ENCODE measurements at regions of chr4 and their contacts with region 1.

Region 1: GRCh38 chr4:184733654-184734524 is at the start of gene CENPU:
- DNase-seq: peak; percentile 99 to 100 (median 100)
- ATAC-seq: peak; percentile 96
- H3K4me3 ChIP-seq: peak within 1 kb of the TSS; percentile 78
- H3K27ac ChIP-seq: peak within 1 kb of the TSS; percentile 84
- H3K4me1 ChIP-seq: peaks cover 0 to 8% of the 10 kb centered on the region in 2 experiments; a peak in 1 of 5 replicates
- H3K27me3 ChIP-seq: no peaks in the 10 kb centered on the region
- CTCF ChIP-seq: no peak
- EP300 ChIP-seq: peak; percentile 67
- POLR2A ChIP-seq: peak; percentile 93
- RAD21 ChIP-seq: no peak
- polyA plus RNA-seq, gene CENPU: 39.4 to 53.7 TPM

Region 2: DNA sequence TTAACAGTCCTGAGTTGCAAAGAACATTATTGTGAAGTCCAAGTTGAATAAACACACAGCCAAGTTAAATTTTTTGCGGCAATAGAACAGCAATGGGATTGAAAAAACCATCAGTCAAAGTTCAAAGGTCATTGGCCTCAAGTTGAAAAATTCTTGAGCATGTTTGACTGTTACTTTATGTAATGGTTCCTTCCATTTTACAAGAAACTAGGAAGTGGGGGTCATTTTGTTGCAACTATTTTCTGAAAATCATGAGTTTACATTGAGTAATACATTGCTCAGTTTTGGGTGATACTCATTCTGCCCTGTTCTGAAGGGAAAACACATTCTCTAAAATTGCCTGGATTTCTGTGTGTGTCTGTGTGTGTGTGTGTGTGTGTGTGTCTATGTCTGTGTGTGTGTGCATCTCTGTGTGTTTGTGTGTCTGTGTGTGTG is 254.4 kb before region 1 on chr4:
- CTCF ChIA-PET with region 1: no interaction called
- POLR2A ChIA-PET with region 1: no interaction called
- in situ Hi-C with region 1: no loop called
- intact Hi-C with region 1: no loop called
- DNase-seq: no peak
- ATAC-seq: no peak
- H3K4me3 ChIP-seq: no peak overlapping the region
- H3K27ac ChIP-seq: no peak overlapping the region
- H3K4me1 ChIP-seq: peaks cover 3 to 15% of the 10 kb centered on the region in 2 experiments
- H3K27me3 ChIP-seq: no peaks in the 10 kb centered on the region
- CTCF ChIP-seq: no peak
- EP300 ChIP-seq: no peak
- POLR2A ChIP-seq: no peak
- RAD21 ChIP-seq: no peak

Region 3: GRCh38 chr4:184649026-184649970 is 84.6 kb before region 1 on chr4 and contains the starts of genes CASP3 and PRIMPOL:
- CTCF ChIA-PET with region 1: no interaction called
- POLR2A ChIA-PET with region 1: no interaction called
- in situ Hi-C with region 1: no loop called
- intact Hi-C with region 1: loop called (anchors 2 kb)
- DNase-seq: peak; percentile 91 to 98 (median 92)
- ATAC-seq: peak; percentile 92
- H3K4me3 ChIP-seq: peak within 1 kb of the TSS; percentile 96
- H3K27ac ChIP-seq: peak within 1 kb of the TSS; percentile 89
- H3K4me1 ChIP-seq: peaks cover 17 to 19% of the 10 kb centered on the region in 2 experiments
- H3K27me3 ChIP-seq: no peaks in the 10 kb centered on the region
- CTCF ChIP-seq: peak in 2 of 3 experiments; percentile 59 to 64; a peak in 4 of 6 replicates
- EP300 ChIP-seq: no peak
- POLR2A ChIP-seq: peak; percentile 84
- RAD21 ChIP-seq: peak; percentile 47
- polyA plus RNA-seq, gene CASP3: 17.6 to 39.3 TPM
- polyA plus RNA-seq, gene PRIMPOL: 11.0 to 14.2 TPM

Region 4: DNA sequence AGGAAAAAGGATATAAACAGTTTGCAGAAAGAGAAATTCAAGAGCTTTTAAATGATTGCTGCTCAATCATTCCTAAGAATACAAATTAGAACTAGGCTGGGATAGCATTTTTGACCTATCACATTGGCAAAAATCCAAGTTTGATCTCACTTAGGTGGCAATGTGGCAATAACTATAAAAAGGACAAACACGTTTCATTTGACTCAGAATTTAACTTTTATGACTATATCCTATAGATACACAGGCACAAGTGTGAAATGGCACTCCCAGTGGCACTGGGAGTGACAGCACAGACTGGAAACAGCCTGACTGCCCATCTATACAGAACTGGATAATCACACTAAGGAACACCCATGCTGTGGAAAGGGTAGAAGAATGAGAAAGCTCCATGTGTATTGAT is 11.1 kb before region 1 on chr4:
- CTCF ChIA-PET with region 1: no interaction called
- POLR2A ChIA-PET with region 1: interaction called, 15 read pairs
- in situ Hi-C with region 1: no loop called
- intact Hi-C with region 1: no loop called
- DNase-seq: peak in 1 of 4 experiments; percentile 8
- ATAC-seq: peak; percentile 73
- H3K4me3 ChIP-seq: no peak overlapping the region
- H3K27ac ChIP-seq: no peak overlapping the region
- H3K4me1 ChIP-seq: no peaks in the 10 kb centered on the region
- H3K27me3 ChIP-seq: no peaks in the 10 kb centered on the region
- CTCF ChIP-seq: 0 out of 6 replicates have a peak, but pooled peaks of 2 of the 3 experiments have one; percentile 11 to 20
- EP300 ChIP-seq: no peak
- POLR2A ChIP-seq: no peak
- RAD21 ChIP-seq: no peak

Region 5: DNA sequence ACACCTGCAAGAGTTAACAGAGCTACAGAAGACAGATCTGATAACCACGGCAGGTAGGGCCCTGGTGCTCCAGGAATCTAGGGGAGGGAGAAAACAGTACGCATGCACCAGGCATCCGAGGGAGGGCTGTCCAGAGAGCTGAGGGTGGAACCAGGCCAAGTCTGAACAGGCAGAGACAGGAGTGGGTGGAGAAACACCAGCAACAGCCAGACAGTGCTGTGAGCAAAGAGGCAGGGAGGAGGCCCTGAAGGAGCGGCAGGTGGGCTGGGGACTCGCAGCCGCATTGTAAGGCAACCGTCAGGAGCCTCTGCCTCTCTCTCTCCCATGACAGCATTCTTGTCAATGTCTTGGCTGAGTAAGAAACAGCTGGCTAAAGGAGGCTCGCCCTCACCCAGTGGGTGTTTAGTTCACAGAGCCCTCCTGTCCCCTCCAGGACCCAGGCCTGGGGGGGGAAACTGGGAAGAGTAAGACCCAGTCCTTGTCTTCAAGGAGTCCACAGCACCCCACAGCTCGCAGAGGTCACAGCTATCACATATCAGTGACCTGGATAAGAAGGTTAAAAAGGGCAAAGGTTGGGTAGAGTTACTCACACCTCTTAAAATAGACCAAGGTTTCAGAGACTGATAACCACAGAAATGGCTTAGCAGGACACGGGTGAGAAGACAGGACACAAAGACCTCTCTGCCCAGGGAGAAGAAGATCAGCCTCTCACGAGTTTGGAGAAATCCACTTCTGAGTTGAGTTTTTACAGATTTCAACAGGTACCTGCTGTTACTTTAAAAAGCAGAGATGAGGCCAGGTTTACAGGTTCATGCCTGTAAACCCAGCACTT is 81.4 kb after region 1 on chr4:
- CTCF ChIA-PET with region 1: no interaction called
- POLR2A ChIA-PET with region 1: no interaction called
- in situ Hi-C with region 1: no loop called
- intact Hi-C with region 1: loop called (anchors 1 kb)
- DNase-seq: peak; percentile 42 to 86 (median 62)
- ATAC-seq: peak; percentile 93
- H3K4me3 ChIP-seq: no peak overlapping the region
- H3K27ac ChIP-seq: peak overlapping the region; percentile 37; the same call in 2 of the 3 replicates
- H3K4me1 ChIP-seq: peaks cover 26 to 51% of the 10 kb centered on the region in 2 experiments
- H3K27me3 ChIP-seq: no peaks in the 10 kb centered on the region
- CTCF ChIP-seq: no peak
- EP300 ChIP-seq: peak; percentile 74
- POLR2A ChIP-seq: no peak
- RAD21 ChIP-seq: 0 out of 4 replicates have a peak, but pooled peaks of 1 of the 2 experiments have one; percentile 12

Region 6: DNA sequence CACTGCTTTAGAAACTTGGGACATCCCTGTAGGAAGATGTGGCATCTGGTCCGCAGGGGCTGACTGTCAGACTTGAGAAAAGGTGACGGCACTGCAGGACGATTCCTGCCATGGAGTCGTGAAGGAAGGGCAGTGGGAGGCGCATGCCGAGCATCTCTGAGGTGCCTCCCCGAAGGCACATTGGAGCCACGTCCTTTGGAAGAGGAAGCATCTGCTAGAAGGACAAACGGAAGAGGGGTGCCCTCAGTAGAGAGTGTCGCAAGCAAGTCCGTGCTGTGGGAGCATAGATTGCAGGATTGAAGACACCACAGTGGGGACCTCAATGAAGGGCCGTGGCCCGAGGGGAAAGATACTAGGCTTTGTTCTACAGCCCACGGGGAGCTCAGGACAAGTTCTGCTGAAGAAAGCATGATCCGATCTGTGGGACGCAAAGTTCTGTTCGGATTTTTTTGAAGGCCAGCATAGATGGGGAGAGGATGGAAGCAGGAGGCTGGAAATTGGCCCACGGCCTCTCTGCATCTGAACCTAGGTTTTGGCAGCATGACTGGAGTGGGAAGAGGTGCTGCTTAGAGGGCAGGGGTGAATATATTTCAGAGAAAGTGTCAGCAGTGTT is 260.2 kb after region 1 on chr4:
- CTCF ChIA-PET with region 1: no interaction called
- POLR2A ChIA-PET with region 1: no interaction called
- in situ Hi-C with region 1: no loop called
- intact Hi-C with region 1: no loop called
- DNase-seq: no peak
- ATAC-seq: no peak
- H3K4me3 ChIP-seq: no peak overlapping the region
- H3K27ac ChIP-seq: no peak overlapping the region
- H3K4me1 ChIP-seq: no peaks in the 10 kb centered on the region
- H3K27me3 ChIP-seq: peaks cover 25 to 37% of the 10 kb centered on the region in 2 experiments
- CTCF ChIP-seq: no peak
- EP300 ChIP-seq: no peak
- POLR2A ChIP-seq: no peak
- RAD21 ChIP-seq: no peak